Calu3 (cell line): ENCODE measurements at regions of chr6 and their contacts with region 1.

Region 1: DNA sequence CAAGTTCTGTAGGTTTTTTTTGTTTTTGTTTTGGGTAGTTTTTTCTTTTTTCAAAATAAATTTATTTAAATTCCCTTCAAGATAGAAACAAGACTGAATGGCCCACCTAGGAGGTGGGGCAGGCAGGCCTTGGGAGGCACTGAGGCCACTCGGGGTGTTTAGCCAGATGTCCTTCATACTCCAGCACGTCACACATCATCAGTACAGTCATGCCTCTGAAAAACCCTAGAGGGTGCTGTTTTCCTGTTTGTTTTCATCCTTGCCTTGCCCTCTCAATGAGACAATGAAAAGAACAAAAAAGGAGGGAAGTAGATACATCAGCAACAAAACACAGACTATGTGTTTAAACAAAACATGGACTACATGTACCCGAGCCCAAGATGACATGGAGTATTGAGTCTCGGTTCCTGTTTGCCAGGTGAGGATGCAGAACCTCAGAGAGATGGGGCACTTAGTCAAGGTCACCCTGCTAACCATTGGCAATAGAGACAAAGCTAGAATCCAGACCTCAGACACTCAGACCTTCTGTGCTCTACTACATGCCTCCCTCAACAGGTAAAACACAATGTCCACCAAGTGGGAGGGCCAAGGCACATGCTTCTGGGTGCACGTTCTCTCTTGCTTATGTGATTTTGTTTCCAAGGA is 26.8 kb upstream of the CLIC5 start:
- DNase-seq: peak; percentile 44
- H3K4me3 Mint-ChIP-seq: no peak overlapping the region
- H3K27ac Mint-ChIP-seq: no peak overlapping the region
- H3K4me1 Mint-ChIP-seq: peaks cover 8% of the 10 kb centered on the region
- H3K27me3 Mint-ChIP-seq: no peaks in the 10 kb centered on the region
- CTCF ChIP-seq: peak; percentile 41

Region 2: DNA sequence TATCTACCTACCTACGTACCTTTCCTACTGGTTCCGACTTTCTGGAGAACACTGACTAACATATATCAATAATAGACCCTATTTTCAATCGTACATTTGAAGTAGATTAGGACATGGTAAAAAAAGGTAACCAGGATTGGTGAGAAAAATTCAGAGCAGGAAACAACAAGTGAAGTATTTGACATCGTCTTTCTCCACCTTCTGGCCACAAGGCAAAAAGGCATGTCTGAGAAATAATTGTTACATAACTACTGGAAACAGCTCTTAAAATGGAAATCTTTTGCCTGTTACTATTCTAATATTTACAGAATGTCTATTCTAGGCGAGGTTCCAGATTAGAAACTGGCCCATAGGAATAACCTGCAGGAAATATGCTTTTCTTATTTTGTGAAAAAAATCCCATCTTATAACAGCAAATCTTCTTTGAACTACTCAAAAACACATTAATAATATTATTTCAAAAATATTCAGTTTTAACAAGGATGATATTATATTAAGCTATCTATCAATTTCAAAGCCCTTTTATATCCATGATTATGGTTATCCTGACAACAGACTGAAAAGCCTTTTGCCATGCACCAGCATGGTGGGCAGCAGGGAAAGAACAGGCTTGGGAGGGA is 368.0 kb after region 1 on chr6:
- CTCF ChIA-PET with region 1: interaction called, 5 read pairs
- intact Hi-C with region 1: loop called (anchors 1 kb)
- DNase-seq: peak; percentile 34
- H3K4me3 Mint-ChIP-seq: no peak overlapping the region
- H3K27ac Mint-ChIP-seq: no peak overlapping the region
- H3K4me1 Mint-ChIP-seq: no peaks in the 10 kb centered on the region
- H3K27me3 Mint-ChIP-seq: no peaks in the 10 kb centered on the region
- CTCF ChIP-seq: peak; percentile 52